ENCODE measurements at regions of chr4 and their contacts with region 1.

Region 1: DNA sequence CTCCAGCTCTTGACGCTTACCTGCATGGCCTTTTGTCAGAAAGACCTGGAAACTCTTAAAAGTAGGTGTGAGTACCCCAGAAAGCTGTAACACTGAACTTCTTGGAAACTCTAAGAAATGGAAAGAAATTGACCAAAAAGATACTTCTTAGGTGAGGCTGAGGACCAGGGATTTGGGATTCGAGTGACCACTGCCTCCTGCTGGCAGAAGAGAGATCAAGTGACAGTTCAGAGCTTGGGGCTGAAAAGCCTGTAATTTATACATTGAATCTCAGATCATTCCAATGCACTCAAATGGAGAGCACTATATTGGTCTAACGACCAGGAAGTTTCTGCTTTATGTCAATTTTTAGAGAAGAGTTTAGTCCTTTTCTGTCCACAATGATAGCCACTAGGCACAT is 204.6 kb downstream of the PDGFRA start:
- DNase-seq: peak in 1 of 2 experiments; percentile 54
- H3K4me3 ChIP-seq: no peak overlapping the region
- H3K27ac ChIP-seq: no peak overlapping the region
- H3K4me1 ChIP-seq: no peaks in the 10 kb centered on the region
- H3K27me3 ChIP-seq: no peaks in the 10 kb centered on the region
- CTCF ChIP-seq: peak; percentile 53 to 77 (median 71)
- EP300 ChIP-seq: no peak
- POLR2A ChIP-seq: no peak
- RAD21 ChIP-seq: peak; percentile 81 to 85

Region 2: DNA sequence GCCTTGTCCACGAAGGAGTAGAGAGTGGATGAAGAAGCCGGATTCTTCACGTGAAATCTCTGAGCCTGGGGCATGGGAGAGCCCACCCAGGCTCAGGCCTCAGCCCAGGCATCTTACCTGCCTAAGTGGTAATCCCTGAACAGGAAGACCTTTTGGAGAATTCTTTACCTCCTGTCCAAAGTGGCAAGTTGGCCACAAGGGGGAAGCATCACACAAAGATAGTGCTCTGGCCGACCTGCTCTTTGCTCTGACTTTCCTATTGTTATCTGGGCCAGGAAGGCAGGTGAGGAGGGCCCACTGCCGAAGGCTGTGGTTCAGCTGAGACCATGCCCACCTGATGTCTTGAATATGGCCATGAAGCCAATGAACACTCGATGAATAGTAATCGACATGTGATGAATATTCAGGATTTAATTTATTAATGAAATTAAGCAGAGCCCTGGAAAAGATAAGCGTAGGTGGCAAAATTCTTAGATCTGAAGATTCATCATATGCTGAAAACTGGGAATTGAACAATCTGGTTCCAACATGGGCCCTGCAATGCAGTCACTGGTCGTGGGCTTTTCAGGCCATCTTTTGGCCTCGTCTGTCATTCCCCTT is 110.8 kb before region 1 on chr4:
- CTCF ChIA-PET with region 1: interaction called, 37 read pairs
- POLR2A ChIA-PET with region 1: no interaction called
- DNase-seq: peak; percentile 61 to 80
- H3K4me3 ChIP-seq: no peak overlapping the region
- H3K27ac ChIP-seq: no peak overlapping the region
- H3K4me1 ChIP-seq: peaks cover 0 to 4% (median 0%) of the 10 kb centered on the region in 4 experiments; a peak in 3 of 7 replicates
- H3K27me3 ChIP-seq: no peaks in the 10 kb centered on the region
- CTCF ChIP-seq: peak; percentile 60 to 91 (median 88)
- EP300 ChIP-seq: no peak
- POLR2A ChIP-seq: no peak
- RAD21 ChIP-seq: peak; percentile 97 to 98

Region 3: DNA sequence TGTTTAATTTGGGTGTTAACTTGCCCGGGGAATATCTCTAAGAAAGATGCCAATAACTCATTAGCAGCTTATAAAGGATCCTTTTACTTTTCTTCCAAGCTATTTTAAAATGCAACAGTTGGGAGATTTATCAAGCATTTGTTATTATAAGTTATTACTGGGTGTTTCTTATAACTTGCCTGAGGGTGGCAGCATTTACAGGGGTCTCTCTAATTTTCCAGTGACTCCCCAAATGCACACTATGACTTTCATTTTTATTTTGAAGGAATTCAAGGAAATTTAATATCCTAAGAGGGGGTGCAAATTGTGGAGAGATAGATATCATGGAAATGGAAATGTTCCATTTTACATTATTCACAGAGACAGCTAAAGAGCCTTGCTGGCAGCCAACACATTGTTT is 66.6 kb before region 1 on chr4:
- CTCF ChIA-PET with region 1: interaction called, 17 read pairs
- POLR2A ChIA-PET with region 1: no interaction called
- DNase-seq: no peak
- H3K4me3 ChIP-seq: no peak overlapping the region
- H3K27ac ChIP-seq: no peak overlapping the region
- H3K4me1 ChIP-seq: peaks cover 0 to 4% (median 0%) of the 10 kb centered on the region in 4 experiments; a peak in 1 of 7 replicates
- H3K27me3 ChIP-seq: no peaks in the 10 kb centered on the region
- CTCF ChIP-seq: no peak
- EP300 ChIP-seq: no peak
- POLR2A ChIP-seq: no peak
- RAD21 ChIP-seq: peak in 1 of 2 experiments; percentile 19; a peak in 2 of 4 replicates

Region 4: DNA sequence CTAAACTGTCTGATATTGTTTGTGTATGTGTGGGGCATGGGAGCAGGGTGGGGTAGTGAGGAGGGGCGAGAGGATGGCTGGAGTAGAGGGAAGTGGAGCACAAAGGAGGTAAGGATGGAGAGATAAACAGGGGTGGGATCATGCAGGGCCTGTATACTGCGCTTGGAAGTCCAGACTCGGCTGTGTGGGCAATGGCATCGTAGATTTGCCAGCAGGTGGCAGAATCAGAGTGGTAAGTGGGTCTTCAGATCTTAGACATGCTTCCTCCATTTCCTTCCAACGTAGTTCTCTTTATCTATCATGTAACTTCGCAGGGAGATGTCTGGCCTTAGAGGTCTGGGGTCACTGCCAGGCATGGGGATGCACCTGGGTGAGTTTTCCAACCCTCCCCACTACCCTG is 49.1 kb before region 1 on chr4:
- CTCF ChIA-PET with region 1: interaction called, 30 read pairs
- POLR2A ChIA-PET with region 1: no interaction called
- DNase-seq: no peak
- H3K4me3 ChIP-seq: no peak overlapping the region
- H3K27ac ChIP-seq: no peak overlapping the region
- H3K4me1 ChIP-seq: no peaks in the 10 kb centered on the region
- H3K27me3 ChIP-seq: no peaks in the 10 kb centered on the region
- CTCF ChIP-seq: peak; percentile 28 to 47 (median 42)
- EP300 ChIP-seq: no peak
- POLR2A ChIP-seq: no peak
- RAD21 ChIP-seq: peak; percentile 50 to 66

Region 5: DNA sequence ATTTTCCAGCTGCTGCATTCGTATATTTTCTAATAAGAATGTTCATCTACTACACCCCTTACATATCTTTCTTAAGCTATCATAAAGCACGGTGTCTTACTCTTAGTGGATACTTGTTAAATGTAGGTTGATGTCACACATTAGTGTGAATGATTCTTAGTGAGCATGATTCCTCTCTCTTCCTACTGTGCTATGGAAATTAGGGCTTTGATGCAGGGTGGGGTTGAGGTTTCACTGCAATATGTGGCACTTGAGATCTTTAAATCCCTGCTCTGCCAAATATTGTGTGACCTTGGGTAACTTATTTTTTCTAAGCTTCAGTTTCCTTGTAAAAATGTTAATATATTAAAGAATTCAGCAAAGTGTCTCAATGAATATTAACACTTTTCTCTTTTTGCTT is 16.2 kb before region 1 on chr4:
- CTCF ChIA-PET with region 1: interaction called, 14 read pairs
- POLR2A ChIA-PET with region 1: interaction called, 3 read pairs
- DNase-seq: no peak
- H3K4me3 ChIP-seq: no peak overlapping the region
- H3K27ac ChIP-seq: no peak overlapping the region
- H3K4me1 ChIP-seq: 0 out of 7 replicates have a peak, but pooled peaks cover 0 to 2% (median 0%) of the 10 kb centered on the region in 4 experiments
- H3K27me3 ChIP-seq: no peaks in the 10 kb centered on the region
- CTCF ChIP-seq: no peak
- EP300 ChIP-seq: no peak
- POLR2A ChIP-seq: no peak
- RAD21 ChIP-seq: no peak

Region 6: DNA sequence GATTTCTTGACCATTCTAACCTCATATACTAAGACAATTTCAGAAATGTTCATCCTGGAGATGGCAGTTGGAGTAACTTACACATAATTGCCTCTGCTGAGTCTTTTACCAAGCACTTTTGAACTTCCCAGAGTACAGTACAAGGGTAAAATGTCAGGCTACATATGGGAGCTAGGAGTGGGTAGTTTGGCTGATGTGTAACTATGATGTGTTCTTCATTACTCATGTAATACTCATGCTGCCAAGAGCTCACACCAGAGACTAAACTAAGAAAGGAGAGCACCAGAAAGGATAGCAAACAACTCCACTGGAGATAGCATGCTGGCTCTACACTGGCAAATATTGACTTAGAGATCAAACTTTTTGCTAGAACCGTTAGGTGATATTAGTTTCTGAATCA is 10.6 kb before region 1 on chr4:
- CTCF ChIA-PET with region 1: interaction called, 14 read pairs
- POLR2A ChIA-PET with region 1: interaction called, 3 read pairs
- DNase-seq: no peak
- H3K4me3 ChIP-seq: no peak overlapping the region
- H3K27ac ChIP-seq: no peak overlapping the region
- H3K4me1 ChIP-seq: peaks cover 0 to 3% (median 0%) of the 10 kb centered on the region in 4 experiments; a peak in 1 of 7 replicates
- H3K27me3 ChIP-seq: no peaks in the 10 kb centered on the region
- CTCF ChIP-seq: no peak
- EP300 ChIP-seq: no peak
- POLR2A ChIP-seq: no peak
- RAD21 ChIP-seq: no peak

Measured in H1 (cell line).